Activated naive CD4-positive, alpha-beta T cell treated with anti-CD3 and anti-CD28 coated beads for 36 hours (primary cell): ENCODE measurements at regions of chr3 and their contacts with region 1.

Region 1: DNA sequence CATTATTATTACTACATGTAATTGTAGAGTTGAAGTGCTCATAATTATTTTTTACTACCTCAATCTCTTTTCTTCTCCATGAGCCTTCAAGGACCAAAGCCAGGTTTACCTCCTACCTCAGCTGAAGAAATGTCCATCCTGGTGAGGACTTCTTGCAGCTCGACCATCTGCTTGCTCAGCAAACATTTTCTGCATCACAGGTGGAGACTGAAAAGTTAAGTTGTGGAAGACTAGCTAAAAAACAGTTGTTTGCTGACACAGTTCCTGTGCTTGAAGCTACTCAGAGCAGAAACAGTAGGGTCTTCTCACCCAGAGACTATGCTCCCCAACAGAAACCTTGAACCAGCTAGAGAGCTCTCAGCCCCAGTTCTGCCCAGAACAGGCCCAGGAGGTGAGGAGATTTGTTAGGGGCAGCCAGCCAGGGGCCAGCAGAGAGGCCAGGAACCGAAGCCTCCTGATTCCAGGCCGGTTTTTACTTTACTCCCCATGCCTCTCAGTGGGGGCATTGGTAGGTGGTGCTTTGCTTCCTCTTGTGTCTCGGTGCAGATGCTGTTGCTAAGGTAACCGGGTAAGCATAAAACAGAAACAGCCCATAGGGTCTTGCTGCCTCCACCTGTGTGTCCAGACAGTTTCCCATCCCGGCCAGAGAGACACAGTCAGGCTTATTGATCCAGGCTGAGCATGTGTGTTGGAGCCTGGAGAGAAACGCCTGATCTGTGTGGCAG is 54.9 kb downstream of the CCNL1 start:
- DNase-seq: no peak
- H3K4me3 Mint-ChIP-seq: no peak overlapping the region
- H3K27ac Mint-ChIP-seq: no peak overlapping the region
- H3K4me1 Mint-ChIP-seq: peaks cover 21% of the 10 kb centered on the region
- H3K27me3 Mint-ChIP-seq: no peaks in the 10 kb centered on the region

Region 2: DNA sequence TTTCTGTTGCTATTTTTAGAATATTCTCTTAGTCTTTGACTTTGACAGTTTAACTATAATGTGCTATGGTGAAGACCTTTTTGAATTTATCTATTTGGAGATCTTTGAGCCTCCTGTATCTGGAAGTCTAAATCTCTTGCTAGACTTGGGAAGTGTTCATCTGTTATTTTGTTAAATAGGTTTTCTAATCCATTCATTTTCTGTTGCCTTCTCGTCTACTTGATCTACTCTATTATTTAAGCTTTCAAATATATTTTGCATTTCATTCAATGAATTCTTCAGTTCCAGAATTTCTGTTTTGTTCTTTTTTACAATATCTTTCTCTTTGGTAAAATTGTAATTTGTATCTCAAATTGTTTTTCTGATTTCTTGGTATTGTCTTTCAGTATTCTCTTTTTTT is 231.2 kb before region 1 on chr3:
- CTCF ChIA-PET with region 1: no interaction called
- intact Hi-C with region 1: no loop called
- DNase-seq: no peak
- H3K4me3 Mint-ChIP-seq: no peak overlapping the region
- H3K27ac Mint-ChIP-seq: no peak overlapping the region
- H3K4me1 Mint-ChIP-seq: no peaks in the 10 kb centered on the region
- H3K27me3 Mint-ChIP-seq: no peaks in the 10 kb centered on the region

Region 3: GRCh38 chr3:157122116-157122515 is 17.0 kb after region 1 on chr3:
- CTCF ChIA-PET with region 1: interaction called, 6 read pairs
- intact Hi-C with region 1: loop called (anchors 1 kb)
- DNase-seq: peak; percentile 52
- H3K4me3 Mint-ChIP-seq: no peak overlapping the region
- H3K27ac Mint-ChIP-seq: peak overlapping the region; percentile 16
- H3K4me1 Mint-ChIP-seq: peaks cover 26% of the 10 kb centered on the region
- H3K27me3 Mint-ChIP-seq: no peaks in the 10 kb centered on the region

Region 4: GRCh38 chr3:157248590-157249422 is 143.7 kb after region 1 on chr3:
- CTCF ChIA-PET with region 1: no interaction called
- intact Hi-C with region 1: no loop called
- DNase-seq: no peak
- H3K4me3 Mint-ChIP-seq: no peak overlapping the region
- H3K27ac Mint-ChIP-seq: no peak overlapping the region
- H3K4me1 Mint-ChIP-seq: peaks cover 8% of the 10 kb centered on the region
- H3K27me3 Mint-ChIP-seq: no peaks in the 10 kb centered on the region